ENCODE measurements at regions of chr2 and their contacts with region 1.

Region 1: GRCh38 chr2:44975571-44976450 is 33.4 kb downstream of the SIX2 start:
- DNase-seq: no peak
- H3K4me3 ChIP-seq: no peak overlapping the region
- H3K27ac ChIP-seq: no peak overlapping the region
- H3K4me1 ChIP-seq: no peaks in the 10 kb centered on the region
- H3K27me3 ChIP-seq: no peaks in the 10 kb centered on the region
- CTCF ChIP-seq: no peak
- POLR2A ChIP-seq: no peak

Region 2: DNA sequence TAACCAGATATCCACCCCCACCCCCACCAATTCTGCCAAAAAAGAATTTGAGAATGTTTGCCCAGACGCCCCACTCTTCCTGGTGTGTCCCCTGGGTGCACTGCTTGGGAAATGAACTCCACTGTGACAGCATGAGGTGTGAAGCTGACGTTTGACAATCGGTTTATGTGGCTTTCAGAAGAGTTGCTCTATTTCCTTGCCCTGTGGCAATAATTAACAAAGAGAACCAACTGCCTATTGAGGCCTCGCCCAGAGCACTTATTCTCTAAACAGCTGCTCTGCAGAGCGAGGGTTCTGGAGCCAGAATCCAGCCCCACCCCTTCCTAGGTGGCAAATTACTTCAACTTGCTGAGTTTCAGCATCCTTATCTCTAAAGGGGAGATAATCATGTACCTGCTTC is 150.1 kb before region 1 on chr2:
- intact Hi-C with region 1: no loop called
- DNase-seq: no peak
- H3K4me3 ChIP-seq: no peak overlapping the region
- H3K27ac ChIP-seq: no peak overlapping the region
- H3K4me1 ChIP-seq: no peaks in the 10 kb centered on the region
- H3K27me3 ChIP-seq: no peaks in the 10 kb centered on the region
- CTCF ChIP-seq: no peak
- POLR2A ChIP-seq: no peak

Region 3: GRCh38 chr2:44850016-44850415 is 125.8 kb before region 1 on chr2:
- intact Hi-C with region 1: no loop called
- DNase-seq: no peak
- H3K4me3 ChIP-seq: no peak overlapping the region
- H3K27ac ChIP-seq: no peak overlapping the region
- H3K4me1 ChIP-seq: no peaks in the 10 kb centered on the region
- H3K27me3 ChIP-seq: no peaks in the 10 kb centered on the region
- CTCF ChIP-seq: no peak
- POLR2A ChIP-seq: no peak

Region 4: DNA sequence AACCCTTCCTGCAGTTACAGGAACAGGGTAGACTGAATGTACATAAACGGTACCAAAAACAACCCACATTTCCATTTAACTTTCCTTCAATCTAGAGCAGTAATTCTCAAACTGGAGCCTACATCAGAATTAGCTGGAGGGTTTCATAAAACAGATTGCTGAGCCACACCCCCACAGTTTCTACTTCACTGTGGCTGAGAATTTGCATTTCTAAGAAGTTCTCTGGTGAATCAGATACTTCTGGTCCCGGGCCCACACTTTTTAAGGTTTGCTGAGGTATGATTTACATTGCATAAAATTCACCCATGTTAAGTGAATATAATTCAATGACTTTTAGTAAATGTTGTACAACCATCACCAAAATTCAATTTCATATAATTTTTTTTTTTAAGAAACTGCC is 521.5 kb after region 1 on chr2:
- intact Hi-C with region 1: loop called (anchors 2 kb)
- DNase-seq: no peak
- H3K4me3 ChIP-seq: no peak overlapping the region
- H3K27ac ChIP-seq: no peak overlapping the region
- H3K4me1 ChIP-seq: no peaks in the 10 kb centered on the region
- H3K27me3 ChIP-seq: no peaks in the 10 kb centered on the region
- CTCF ChIP-seq: no peak
- POLR2A ChIP-seq: no peak